Activated CD4-positive, alpha-beta memory T cell treated with anti-CD3 and anti-CD28 coated beads for 36 hours (primary cell): ENCODE measurements at regions of chr17 and their contacts with region 1.

Region 1: DNA sequence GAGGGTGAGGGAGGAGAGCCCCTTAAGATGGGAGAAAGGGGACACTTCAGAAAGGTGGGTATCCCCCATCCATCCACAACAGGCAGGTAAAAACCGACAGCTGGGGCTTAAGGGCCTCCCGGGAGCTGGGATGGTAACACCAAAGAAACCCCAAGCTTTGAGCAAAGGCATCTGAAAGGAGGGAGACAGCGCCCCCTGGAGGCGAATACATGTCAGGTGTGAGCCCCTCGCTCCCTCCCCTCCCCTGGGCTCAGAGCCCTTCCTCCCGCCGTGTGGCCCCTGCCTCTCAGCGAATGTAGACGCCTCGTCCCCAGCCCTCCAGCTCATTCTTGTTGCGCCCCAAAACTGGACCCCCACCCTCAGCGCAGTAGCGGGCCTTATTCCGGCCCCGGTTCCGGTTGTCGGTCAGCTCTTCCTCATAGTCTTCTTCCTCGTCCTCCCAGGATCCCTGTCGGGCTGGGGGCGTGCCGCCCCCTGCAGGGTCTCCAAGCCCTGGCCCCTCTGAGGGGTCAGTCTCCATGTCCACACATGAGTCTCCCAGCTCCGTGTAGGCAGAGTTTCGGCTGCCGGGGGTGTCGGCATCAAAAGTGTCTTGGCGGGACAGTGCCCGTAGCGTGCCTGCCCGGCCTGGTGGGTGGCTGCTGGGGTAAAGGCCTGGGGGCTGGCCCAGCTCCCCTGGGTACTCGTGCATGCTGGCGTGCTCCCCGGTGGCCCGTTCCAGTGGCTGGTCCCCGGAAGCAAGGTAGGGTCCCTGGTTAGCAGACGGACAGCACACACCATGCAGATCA is 9.1 kb upstream of the ARL5C start:
- DNase-seq: peak; percentile 80
- H3K4me3 Mint-ChIP-seq: no peak overlapping the region
- H3K27ac Mint-ChIP-seq: no peak overlapping the region
- H3K4me1 Mint-ChIP-seq: no peaks in the 10 kb centered on the region
- H3K27me3 Mint-ChIP-seq: no peaks in the 10 kb centered on the region

Region 2: DNA sequence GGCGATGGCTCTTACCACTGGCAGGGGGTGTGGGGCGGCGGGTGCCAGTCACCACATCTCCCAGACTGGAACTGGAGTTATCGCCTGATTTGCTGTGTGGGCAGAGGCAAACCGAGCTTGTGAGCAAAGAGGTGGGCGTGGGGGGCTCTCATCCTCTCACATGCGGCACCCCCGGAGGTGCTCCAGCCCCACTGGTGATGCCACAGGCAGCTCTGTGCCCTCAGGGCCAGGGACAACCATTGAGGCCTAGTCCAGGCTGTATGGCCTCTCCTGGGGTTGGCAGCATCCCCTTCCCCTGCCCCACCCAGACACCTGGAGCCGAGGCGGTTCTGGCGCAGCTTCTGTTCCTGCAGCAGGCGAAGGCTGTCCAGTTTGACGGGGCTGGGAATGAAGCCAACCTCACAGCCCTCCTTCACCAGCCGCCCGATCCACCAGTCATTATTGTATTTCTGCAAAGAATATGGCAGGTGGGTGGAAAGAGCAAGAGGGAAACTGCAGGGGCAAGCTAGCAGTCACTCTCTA is 11.4 kb after region 1 on chr17:
- CTCF ChIA-PET with region 1: interaction called, 23 read pairs
- POLR2A ChIA-PET with region 1: no interaction called
- intact Hi-C with region 1: no loop called
- DNase-seq: no peak
- H3K4me3 Mint-ChIP-seq: no peak overlapping the region
- H3K27ac Mint-ChIP-seq: no peak overlapping the region
- H3K4me1 Mint-ChIP-seq: no peaks in the 10 kb centered on the region
- H3K27me3 Mint-ChIP-seq: no peaks in the 10 kb centered on the region

Region 3: DNA sequence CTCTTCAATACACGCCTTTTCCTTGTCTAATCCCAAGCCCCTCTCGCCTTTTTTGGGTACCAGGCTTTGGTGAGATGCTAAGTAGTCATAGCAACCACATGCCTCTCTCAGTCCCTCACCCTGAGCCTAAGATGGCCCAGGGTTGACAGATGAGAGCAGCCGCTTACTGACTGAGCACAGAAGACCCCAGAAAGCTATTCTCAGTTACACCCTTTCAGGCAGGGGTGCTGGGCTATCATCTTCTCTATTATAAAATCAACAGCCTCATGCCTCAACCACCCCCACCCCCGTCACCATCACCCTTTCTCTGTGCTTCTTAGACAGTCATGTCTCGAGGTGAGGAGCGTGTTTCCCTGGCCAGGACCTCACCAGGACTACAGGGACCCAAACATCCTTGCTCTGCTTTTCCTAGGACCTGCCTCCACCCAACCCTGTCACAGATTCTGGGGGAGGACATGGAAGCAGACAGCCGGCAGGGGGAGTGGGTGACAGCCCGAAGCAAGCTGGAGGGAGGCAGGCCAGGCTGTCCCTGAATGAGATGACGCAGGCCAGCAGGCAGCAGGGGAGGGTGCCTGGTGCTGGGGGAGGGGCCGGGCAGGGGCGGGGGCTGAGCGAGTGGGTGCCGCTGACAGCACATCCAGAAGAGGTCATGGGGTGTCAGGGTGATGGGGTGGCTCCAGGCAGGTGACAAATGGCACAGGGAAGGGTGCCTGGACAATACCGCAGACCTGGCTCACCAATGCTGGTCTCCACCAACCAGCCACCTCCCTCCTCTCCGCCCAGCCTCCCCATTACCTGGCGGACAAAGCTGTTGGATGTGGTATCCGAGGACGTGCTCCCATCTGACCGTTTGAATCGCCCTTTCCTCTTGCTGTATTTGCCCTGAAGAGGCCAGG is 19.2 kb after region 1 on chr17:
- CTCF ChIA-PET with region 1: interaction called, 23 read pairs
- POLR2A ChIA-PET with region 1: no interaction called
- intact Hi-C with region 1: no loop called
- DNase-seq: no peak
- H3K4me3 Mint-ChIP-seq: no peak overlapping the region
- H3K27ac Mint-ChIP-seq: no peak overlapping the region
- H3K4me1 Mint-ChIP-seq: peaks cover 35% of the 10 kb centered on the region
- H3K27me3 Mint-ChIP-seq: no peaks in the 10 kb centered on the region

Region 4: GRCh38 chr17:39219647-39220154 is 44.6 kb after region 1 on chr17:
- CTCF ChIA-PET with region 1: no interaction called
- POLR2A ChIA-PET with region 1: no interaction called
- intact Hi-C with region 1: no loop called
- DNase-seq: no peak
- H3K4me3 Mint-ChIP-seq: no peak overlapping the region
- H3K27ac Mint-ChIP-seq: no peak overlapping the region
- H3K4me1 Mint-ChIP-seq: peaks cover 2% of the 10 kb centered on the region
- H3K27me3 Mint-ChIP-seq: peaks cover 31% of the 10 kb centered on the region

Region 5: DNA sequence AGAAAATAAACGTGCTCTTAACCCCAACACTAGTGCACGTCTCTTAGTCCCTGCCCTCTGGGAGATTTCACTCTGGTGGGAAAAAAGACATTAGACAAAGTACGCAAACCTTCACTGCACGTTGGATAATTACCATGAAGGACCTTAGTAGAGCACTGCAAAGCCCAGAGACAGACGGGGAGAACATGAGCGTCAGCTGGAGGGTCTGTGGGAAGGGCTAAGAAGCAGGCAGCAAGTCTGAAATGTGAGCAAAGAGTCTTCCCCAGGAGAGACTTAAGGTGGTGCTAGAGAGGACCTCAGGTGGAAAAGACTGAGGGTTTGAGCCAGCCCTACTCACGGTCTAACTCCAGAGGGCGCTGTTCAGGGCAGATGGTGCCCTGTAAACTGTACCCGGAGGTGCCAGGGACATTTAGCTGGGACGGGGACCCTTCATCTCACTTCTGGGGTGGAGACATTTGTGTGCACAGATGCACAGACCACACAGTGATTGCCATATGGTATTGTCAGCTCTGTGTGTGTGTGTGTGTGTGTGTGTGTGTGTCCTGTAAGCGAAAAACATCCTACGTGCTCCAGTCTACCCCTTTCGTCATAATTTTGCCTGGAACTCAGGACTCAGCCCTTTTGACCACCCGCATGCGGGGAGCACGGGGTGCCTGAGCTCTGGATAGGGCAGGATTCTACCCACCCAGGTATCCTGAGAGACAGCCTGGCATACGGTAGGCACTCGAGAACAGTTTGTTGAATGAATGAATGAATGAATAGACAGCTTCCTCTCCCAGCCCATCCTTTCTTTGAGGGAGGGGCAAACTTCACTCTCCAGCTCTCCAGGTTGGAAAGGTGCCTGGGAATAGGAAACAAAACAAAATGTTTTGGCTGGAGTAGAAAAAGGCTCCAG is 60.7 kb after region 1 on chr17:
- CTCF ChIA-PET with region 1: interaction called, 18 read pairs
- POLR2A ChIA-PET with region 1: interaction called, 3 read pairs
- intact Hi-C with region 1: no loop called
- DNase-seq: peak; percentile 73
- H3K4me3 Mint-ChIP-seq: no peak overlapping the region
- H3K27ac Mint-ChIP-seq: no peak overlapping the region
- H3K4me1 Mint-ChIP-seq: peaks cover 29% of the 10 kb centered on the region
- H3K27me3 Mint-ChIP-seq: peaks cover 11% of the 10 kb centered on the region

Region 6: GRCh38 chr17:39270923-39271322 is 95.8 kb after region 1 on chr17:
- CTCF ChIA-PET with region 1: no interaction called
- POLR2A ChIA-PET with region 1: no interaction called
- intact Hi-C with region 1: no loop called
- DNase-seq: peak; percentile 20
- H3K4me3 Mint-ChIP-seq: no peak overlapping the region
- H3K27ac Mint-ChIP-seq: no peak overlapping the region
- H3K4me1 Mint-ChIP-seq: no peaks in the 10 kb centered on the region
- H3K27me3 Mint-ChIP-seq: no peaks in the 10 kb centered on the region